ENCODE measurements at regions of chr15 and their contacts with region 1.

Region 1: DNA sequence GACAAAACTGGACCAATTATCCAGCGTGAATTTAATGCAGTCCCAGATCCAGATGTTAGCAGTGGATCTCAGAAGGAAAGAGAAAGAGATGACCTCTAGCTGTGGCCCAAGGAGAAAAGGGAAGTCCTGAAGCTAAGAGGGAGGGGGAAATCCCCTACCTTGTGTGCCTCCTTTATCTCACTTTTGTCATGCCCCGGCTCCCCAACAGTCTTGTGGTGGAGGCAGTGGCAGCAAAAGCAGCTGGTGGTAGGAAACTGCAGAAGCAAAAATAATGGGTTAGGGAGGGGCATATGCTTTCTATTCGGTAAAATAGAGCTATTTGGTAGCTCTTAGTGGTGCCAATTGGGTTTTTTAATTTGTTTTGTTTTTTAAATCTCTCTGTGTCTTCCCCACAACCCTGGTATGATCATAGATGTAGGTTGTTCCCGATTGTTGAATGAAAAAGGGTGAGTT is 56.5 kb downstream of the MCTP2 start:
- DNase-seq: peak; percentile 43
- H3K4me3 ChIP-seq: no peak overlapping the region
- H3K27ac ChIP-seq: peak overlapping the region in 2 of 4 donors; percentile 22 to 44
- H3K4me1 ChIP-seq: peaks cover 0 to 35% (median 6%) of the 10 kb centered on the region in 4 donors
- H3K27me3 ChIP-seq: no peaks in the 10 kb centered on the region
- CTCF ChIP-seq: no peak
- EP300 ChIP-seq: no peak
- POLR2A ChIP-seq: no peak

Region 2: DNA sequence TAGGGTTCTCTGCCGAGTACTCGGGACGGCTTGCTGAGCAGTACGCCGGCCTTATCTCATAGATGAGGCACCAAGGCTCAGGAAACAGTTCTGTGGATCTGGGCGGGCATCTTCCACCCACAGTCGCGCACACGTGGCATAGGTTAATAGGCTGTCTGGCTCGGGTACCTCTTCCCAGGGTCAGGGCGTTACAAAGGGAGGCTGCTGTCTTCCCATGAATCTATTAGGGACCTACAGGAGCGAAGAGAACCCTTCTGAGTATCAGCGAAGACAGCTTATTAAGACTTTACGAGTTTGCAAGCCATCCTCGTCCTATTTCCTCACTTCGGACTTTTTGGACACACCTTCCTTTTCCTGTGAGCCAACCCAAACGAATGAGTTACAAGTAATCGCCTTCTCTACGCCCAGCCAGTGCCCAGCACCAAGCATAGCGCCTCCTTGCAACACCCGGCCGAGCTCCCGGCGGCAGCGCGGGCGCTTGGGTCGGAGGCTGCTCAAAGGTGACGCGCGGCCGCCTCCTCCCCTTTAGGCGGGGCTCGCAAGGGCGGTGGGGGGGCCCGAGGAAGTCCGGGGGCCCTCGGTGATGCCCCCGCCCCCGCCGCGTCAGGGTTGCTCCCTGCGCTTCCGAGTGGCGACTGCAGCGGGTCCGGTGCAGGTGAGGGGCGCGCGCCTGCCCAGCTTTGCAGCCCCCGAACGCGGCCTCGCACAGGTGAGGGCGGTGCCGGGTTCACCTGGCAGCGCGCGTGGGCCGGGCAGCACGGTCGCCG is 56.7 kb before region 1 on chr15 and contains the start of gene MCTP2:
- in situ Hi-C with region 1: no loop called
- intact Hi-C with region 1: no loop called
- DNase-seq: peak; percentile 93
- H3K4me3 ChIP-seq: peak within 1 kb of the TSS; percentile 34 to 81 (median 67)
- H3K27ac ChIP-seq: peak within 1 kb of the TSS; percentile 88 to 94 (median 90)
- H3K4me1 ChIP-seq: peaks cover 0 to 51% (median 25%) of the 10 kb centered on the region in 4 donors
- H3K27me3 ChIP-seq: no peaks in the 10 kb centered on the region
- CTCF ChIP-seq: peak in 3 of 5 experiments; percentile 5 to 27 (median 17)
- EP300 ChIP-seq: no peak
- POLR2A ChIP-seq: peak; percentile 81
- total RNA-seq, gene MCTP2: 108 to 409 (median 144) TPM

Region 3: DNA sequence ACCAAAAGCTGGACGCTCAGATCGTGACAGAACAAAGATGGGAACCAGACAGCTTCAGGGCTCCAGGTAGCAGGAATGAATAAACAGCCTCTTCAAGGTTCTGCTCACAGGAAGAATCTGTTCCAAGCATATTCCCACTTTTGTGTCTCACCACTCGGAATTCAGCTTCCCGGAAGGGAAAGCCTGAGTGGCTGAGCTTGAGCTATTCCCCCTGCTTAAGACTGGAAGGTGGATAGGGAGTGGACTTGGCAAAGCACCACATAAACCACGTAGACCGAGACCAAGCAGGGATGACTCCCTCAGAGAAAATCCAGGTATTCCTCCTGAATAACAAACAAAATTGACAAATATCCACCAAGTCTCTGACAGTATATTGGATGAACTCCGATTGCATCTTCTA is 1862.4 kb after region 1 on chr15:
- in situ Hi-C with region 1: no loop called
- intact Hi-C with region 1: loop called (anchors 5 kb)
- DNase-seq: no peak
- H3K4me3 ChIP-seq: no peak overlapping the region
- H3K27ac ChIP-seq: no peak overlapping the region
- H3K4me1 ChIP-seq: no peaks in the 10 kb centered on the region
- H3K27me3 ChIP-seq: no peaks in the 10 kb centered on the region
- CTCF ChIP-seq: no peak
- EP300 ChIP-seq: no peak
- POLR2A ChIP-seq: no peak